Heart right ventricle (tissue), 16 donors: ENCODE measurements at regions of chr1 and their contacts with region 1.

Region 1: GRCh38 chr1:47192458-47193384 is 2.9 kb upstream of the PDZK1IP1 start:
- DNase-seq: peak; percentile 77 to 79
- ATAC-seq: peak; percentile 53 to 82 (median 66)
- H3K4me3 ChIP-seq: no peak overlapping the region
- H3K27ac ChIP-seq: no peak overlapping the region
- H3K4me1 ChIP-seq: peaks cover 2 to 35% (median 21%) of the 10 kb centered on the region in 9 donors
- H3K27me3 ChIP-seq: peaks cover 0 to 24% (median 0%) of the 10 kb centered on the region in 7 donors
- CTCF ChIP-seq: peak; percentile 92 to 97 (median 95)

Region 2: GRCh38 chr1:46303038-46303871 is 889.5 kb before region 1 on chr1 and contains the starts of genes LRRC41 and UQCRH:
- intact Hi-C with region 1: no loop called
- DNase-seq: peak; percentile 93 to 96
- ATAC-seq: peak; percentile 91 to 96 (median 92)
- H3K4me3 ChIP-seq: peak within 1 kb of the TSS; percentile 76 to 98 (median 90)
- H3K27ac ChIP-seq: peak within 1 kb of the TSS; percentile 95 to 99 (median 98)
- H3K4me1 ChIP-seq: peaks cover 13 to 76% (median 69%) of the 10 kb centered on the region in 9 donors
- H3K27me3 ChIP-seq: no peaks in the 10 kb centered on the region
- CTCF ChIP-seq: peak in 1 of 9 donors; percentile 27
- total RNA-seq, gene LRRC41: 36.7 to 52.5 (median 43.6) TPM
- total RNA-seq, gene UQCRH: 759 to 1,195 (median 1,005) TPM

Region 3: GRCh38 chr1:47262787-47263413 is 70.2 kb after region 1 on chr1:
- intact Hi-C with region 1: loop called (anchors 2 to 5 kb)
- DNase-seq: peak in 1 of 2 donors; percentile 47
- ATAC-seq: peak in 1 of 8 donors; percentile 49
- H3K4me3 ChIP-seq: no peak overlapping the region
- H3K27ac ChIP-seq: no peak overlapping the region
- H3K4me1 ChIP-seq: no peaks in the 10 kb centered on the region
- H3K27me3 ChIP-seq: no peaks in the 10 kb centered on the region
- CTCF ChIP-seq: peak; percentile 25 to 76 (median 63)

Region 4: GRCh38 chr1:47333922-47334764 is 141.4 kb after region 1 on chr1:
- intact Hi-C with region 1: loop called in 3 of 10 experiments (anchors 5 to 10 kb)
- DNase-seq: peak; percentile 75 to 83
- ATAC-seq: peak; percentile 92 to 97 (median 96)
- H3K4me3 ChIP-seq: peak overlapping the region; percentile 63 to 99 (median 90)
- H3K27ac ChIP-seq: peak overlapping the region; percentile 95 to 100 (median 99)
- H3K4me1 ChIP-seq: peaks cover 0 to 56% (median 41%) of the 10 kb centered on the region in 9 donors
- H3K27me3 ChIP-seq: no peaks in the 10 kb centered on the region
- CTCF ChIP-seq: peak in 5 of 9 donors; percentile 19 to 61 (median 28)

Region 5: GRCh38 chr1:47362828-47363227 is 170.1 kb after region 1 on chr1:
- intact Hi-C with region 1: no loop called
- DNase-seq: no peak
- ATAC-seq: no peak
- H3K4me3 ChIP-seq: no peak overlapping the region
- H3K27ac ChIP-seq: no peak overlapping the region
- H3K4me1 ChIP-seq: peaks cover 0 to 25% (median 0%) of the 10 kb centered on the region in 9 donors
- H3K27me3 ChIP-seq: no peaks in the 10 kb centered on the region
- CTCF ChIP-seq: no peak

Region 6: DNA sequence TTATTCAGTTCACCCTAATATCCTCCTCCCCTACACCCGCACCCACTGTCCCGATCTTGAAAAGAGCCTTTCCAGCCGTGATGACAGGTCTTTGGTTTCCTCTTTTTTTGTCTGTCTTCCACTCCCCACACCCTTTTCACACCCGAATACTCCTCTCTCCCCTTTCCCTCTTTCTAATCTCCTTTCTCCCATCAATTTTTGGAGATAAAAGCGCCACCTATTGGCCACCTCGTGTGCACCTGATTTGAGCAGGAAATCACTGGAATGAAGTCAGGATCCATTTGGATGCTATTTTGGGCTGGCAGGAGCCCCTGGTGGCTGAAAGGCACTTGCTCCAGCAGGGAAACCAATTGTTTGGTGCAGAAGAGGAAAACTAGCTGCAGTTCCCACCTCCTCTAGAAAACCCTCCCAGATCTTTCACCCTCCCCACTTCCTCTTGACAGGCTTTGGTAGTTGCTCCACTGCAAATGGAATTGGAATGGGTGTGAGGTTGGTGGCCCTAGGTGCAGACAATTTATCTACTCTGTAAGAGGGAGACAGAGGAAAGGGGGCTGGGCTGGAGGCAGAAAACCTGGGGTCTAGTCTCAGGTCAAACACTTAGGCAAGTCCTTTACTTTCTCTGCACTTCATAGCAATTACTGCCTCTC is 231.7 kb after region 1 on chr1:
- intact Hi-C with region 1: loop called in 3 of 10 experiments (anchors 5 to 10 kb)
- DNase-seq: no peak
- ATAC-seq: peak in 3 of 8 donors; percentile 33 to 57 (median 51)
- H3K4me3 ChIP-seq: no peak overlapping the region
- H3K27ac ChIP-seq: no peak overlapping the region
- H3K4me1 ChIP-seq: peaks cover 0 to 8% (median 0%) of the 10 kb centered on the region in 9 donors
- H3K27me3 ChIP-seq: peaks cover 0 to 72% (median 48%) of the 10 kb centered on the region in 7 donors
- CTCF ChIP-seq: peak; percentile 38 to 79 (median 64)

Region 7: GRCh38 chr1:47710329-47711071 is 517.8 kb after region 1 on chr1:
- intact Hi-C with region 1: loop called in 1 of 10 experiments (anchors 5 kb)
- DNase-seq: peak; percentile 62 to 83
- ATAC-seq: peak; percentile 86 to 93 (median 90)
- H3K4me3 ChIP-seq: peak overlapping the region in 9 of 10 donors; percentile 33 to 52 (median 49)
- H3K27ac ChIP-seq: no peak overlapping the region
- H3K4me1 ChIP-seq: peaks cover 6 to 30% (median 24%) of the 10 kb centered on the region in 9 donors
- H3K27me3 ChIP-seq: peaks cover 21 to 100% (median 98%) of the 10 kb centered on the region in 7 donors
- CTCF ChIP-seq: peak; percentile 94 to 100 (median 99)